ENCODE measurements at regions of chr17 and their contacts with region 1.

Region 1: GRCh38 chr17:50626037-50626574 is 8.6 kb upstream of the ABCC3 start:
- DNase-seq: peak; percentile 76
- H3K4me3 Mint-ChIP-seq: no peak overlapping the region
- H3K27ac Mint-ChIP-seq: no peak overlapping the region
- H3K4me1 Mint-ChIP-seq: no peaks in the 10 kb centered on the region
- H3K27me3 Mint-ChIP-seq: peaks cover 33% of the 10 kb centered on the region

Region 2: GRCh38 chr17:50541716-50542688 is 84.1 kb before region 1 on chr17:
- CTCF ChIA-PET with region 1: interaction called, 29 read pairs
- intact Hi-C with region 1: loop called (anchors 1 kb)
- DNase-seq: peak; percentile 81
- H3K4me3 Mint-ChIP-seq: peak overlapping the region; percentile 64
- H3K27ac Mint-ChIP-seq: no peak overlapping the region
- H3K4me1 Mint-ChIP-seq: peaks cover 12% of the 10 kb centered on the region
- H3K27me3 Mint-ChIP-seq: peaks cover 2% of the 10 kb centered on the region

Region 3: DNA sequence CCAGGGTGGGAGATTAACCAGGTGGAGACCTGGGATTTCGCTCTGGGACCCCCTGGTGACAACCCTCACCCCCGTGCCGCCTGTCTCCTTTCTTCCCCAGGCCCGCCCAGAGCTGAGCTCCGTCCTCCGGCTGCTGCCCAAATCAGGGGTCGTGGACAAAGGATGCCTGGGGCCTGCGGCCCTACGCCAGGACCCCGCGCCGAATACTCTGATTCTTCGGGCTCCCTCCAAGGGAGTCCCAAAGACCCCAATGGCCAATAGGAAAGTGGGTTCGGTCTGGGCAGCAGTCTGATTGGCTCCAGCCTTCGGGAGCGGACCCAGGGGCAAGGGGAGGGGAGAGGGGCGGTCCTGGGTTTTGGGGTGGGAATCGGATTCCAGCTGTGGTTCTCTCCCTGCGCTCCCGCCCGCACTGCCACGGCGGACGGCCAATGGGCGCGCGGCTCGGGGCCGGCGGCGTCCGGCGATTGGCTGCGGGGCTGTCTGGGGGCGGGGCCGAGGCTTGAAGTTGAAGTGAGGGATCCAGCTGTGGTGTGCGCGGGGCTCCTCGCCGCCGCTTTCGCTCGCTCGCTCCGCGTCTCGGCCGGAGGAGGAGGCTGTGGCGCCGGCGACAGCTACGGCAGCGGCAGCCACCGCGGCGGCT is 65.8 kb before region 1 on chr17 and contains the start of gene CACNA1G:
- CTCF ChIA-PET with region 1: interaction called, 7 read pairs
- intact Hi-C with region 1: loop called (anchors 5 kb)
- DNase-seq: peak; percentile 89
- H3K4me3 Mint-ChIP-seq: peak within 1 kb of the TSS; percentile 66
- H3K27ac Mint-ChIP-seq: no peak within 1 kb of the TSS
- H3K4me1 Mint-ChIP-seq: peaks cover 27% of the 10 kb centered on the region
- H3K27me3 Mint-ChIP-seq: peaks cover 48% of the 10 kb centered on the region
- total RNA-seq, gene CACNA1G: 0.22 to 0.24 TPM

Region 4: GRCh38 chr17:50638851-50639767 is 13.0 kb after region 1 on chr17:
- CTCF ChIA-PET with region 1: interaction called, 35 read pairs
- intact Hi-C with region 1: no loop called
- DNase-seq: no peak
- H3K4me3 Mint-ChIP-seq: no peak overlapping the region
- H3K27ac Mint-ChIP-seq: no peak overlapping the region
- H3K4me1 Mint-ChIP-seq: no peaks in the 10 kb centered on the region
- H3K27me3 Mint-ChIP-seq: peaks cover 29% of the 10 kb centered on the region

Region 5: GRCh38 chr17:50689956-50690886 is 64.1 kb after region 1 on chr17:
- CTCF ChIA-PET with region 1: interaction called, 50 read pairs
- intact Hi-C with region 1: loop called (anchors 1 kb)
- DNase-seq: no peak
- H3K4me3 Mint-ChIP-seq: no peak overlapping the region
- H3K27ac Mint-ChIP-seq: no peak overlapping the region
- H3K4me1 Mint-ChIP-seq: no peaks in the 10 kb centered on the region
- H3K27me3 Mint-ChIP-seq: no peaks in the 10 kb centered on the region

Region 6: DNA sequence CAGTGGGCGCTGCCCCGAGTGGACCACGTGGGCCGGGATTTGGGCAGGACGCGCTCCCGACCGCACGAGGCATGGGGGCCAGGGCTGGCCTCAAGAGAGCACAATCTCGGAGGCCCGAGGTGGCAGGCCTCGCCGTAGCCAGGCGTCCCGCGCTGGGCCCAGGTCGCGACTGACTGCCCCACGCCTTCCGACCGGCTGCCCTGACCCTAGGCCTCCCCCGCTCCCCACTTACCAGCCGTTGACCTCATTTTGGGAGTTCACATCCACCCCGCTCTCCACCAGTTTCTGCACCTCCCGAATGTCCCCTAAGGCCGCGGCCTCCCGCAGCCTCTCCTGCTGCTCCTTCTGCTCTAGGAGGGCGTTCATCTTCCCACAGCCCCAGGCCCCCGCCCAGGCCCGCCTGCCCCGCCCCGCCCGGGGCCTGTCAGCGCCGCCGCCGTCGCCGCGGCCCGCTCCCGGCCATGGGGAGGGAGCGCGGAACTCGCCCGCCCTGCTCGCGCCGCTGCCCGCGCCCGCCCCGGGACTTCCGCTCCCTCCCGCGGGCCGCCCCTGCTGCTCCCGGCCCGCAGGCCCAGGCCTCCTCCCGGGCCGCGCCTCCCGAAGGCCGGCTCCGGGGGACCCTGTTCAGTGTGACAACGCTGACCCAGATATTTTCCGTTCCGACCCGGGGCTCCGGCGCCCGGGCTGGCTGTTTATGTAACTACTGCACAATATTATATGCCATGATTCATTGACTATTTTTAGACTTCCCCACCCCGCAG is 81.4 kb after region 1 on chr17 and contains the start of gene ANKRD40:
- CTCF ChIA-PET with region 1: interaction called, 11 read pairs
- intact Hi-C with region 1: no loop called
- DNase-seq: peak; percentile 94
- H3K4me3 Mint-ChIP-seq: peak within 1 kb of the TSS; percentile 95
- H3K27ac Mint-ChIP-seq: peak within 1 kb of the TSS; percentile 92
- H3K4me1 Mint-ChIP-seq: peaks cover 44% of the 10 kb centered on the region
- H3K27me3 Mint-ChIP-seq: no peaks in the 10 kb centered on the region
- total RNA-seq, gene ANKRD40: 25.7 to 26.5 TPM

Measured in activated naive CD4-positive, alpha-beta T cell treated with anti-CD3 and anti-CD28 coated beads for 36 hours (primary cell).